OCI-LY7 (cell line): ENCODE measurements at regions of chr4 and their contacts with region 1.

Region 1: DNA sequence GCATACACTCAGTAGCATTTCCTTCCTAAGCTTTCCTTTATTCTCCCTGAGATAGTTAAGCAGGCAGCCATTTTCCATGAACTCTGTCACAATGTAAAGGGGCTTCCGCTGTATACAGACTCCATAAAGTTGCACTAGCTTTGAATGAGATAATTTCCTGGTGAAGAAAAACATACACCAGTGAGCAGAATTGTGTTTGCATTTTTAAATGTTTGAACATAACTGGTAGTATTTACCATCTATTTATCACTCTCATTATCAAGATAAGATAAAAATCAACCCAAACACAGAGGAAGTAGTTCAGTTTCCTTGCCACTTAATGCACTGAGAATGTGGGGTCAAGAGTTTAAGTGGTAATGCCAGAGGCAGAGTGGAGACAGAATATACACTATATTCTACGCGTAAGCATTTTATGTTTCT is 54.1 kb downstream of the TXK start:
- DNase-seq: no peak
- H3K4me3 ChIP-seq: no peak overlapping the region
- H3K27ac ChIP-seq: no peak overlapping the region
- H3K4me1 ChIP-seq: no peaks in the 10 kb centered on the region
- CTCF ChIP-seq: no peak

Region 2: GRCh38 chr4:47704693-47705325 is 375.2 kb before region 1 on chr4:
- CTCF ChIA-PET with region 1: no interaction called
- POLR2A ChIA-PET with region 1: no interaction called
- intact Hi-C with region 1: loop called (anchors 10 kb)
- DNase-seq: peak; percentile 46
- H3K4me3 ChIP-seq: no peak overlapping the region
- H3K27ac ChIP-seq: no peak overlapping the region
- H3K4me1 ChIP-seq: no peaks in the 10 kb centered on the region
- CTCF ChIP-seq: peak; percentile 66

Region 3: GRCh38 chr4:48058284-48058962 is 21.6 kb before region 1 on chr4:
- CTCF ChIA-PET with region 1: no interaction called
- POLR2A ChIA-PET with region 1: no interaction called
- intact Hi-C with region 1: no loop called
- DNase-seq: no peak
- H3K4me3 ChIP-seq: no peak overlapping the region
- H3K27ac ChIP-seq: no peak overlapping the region
- H3K4me1 ChIP-seq: no peaks in the 10 kb centered on the region
- CTCF ChIP-seq: no peak